Activated B cell treated with CpG ODN at 0.5 μM for 24 hours (primary cell): ENCODE measurements at regions of chr4 and their contacts with region 1.

Region 1: DNA sequence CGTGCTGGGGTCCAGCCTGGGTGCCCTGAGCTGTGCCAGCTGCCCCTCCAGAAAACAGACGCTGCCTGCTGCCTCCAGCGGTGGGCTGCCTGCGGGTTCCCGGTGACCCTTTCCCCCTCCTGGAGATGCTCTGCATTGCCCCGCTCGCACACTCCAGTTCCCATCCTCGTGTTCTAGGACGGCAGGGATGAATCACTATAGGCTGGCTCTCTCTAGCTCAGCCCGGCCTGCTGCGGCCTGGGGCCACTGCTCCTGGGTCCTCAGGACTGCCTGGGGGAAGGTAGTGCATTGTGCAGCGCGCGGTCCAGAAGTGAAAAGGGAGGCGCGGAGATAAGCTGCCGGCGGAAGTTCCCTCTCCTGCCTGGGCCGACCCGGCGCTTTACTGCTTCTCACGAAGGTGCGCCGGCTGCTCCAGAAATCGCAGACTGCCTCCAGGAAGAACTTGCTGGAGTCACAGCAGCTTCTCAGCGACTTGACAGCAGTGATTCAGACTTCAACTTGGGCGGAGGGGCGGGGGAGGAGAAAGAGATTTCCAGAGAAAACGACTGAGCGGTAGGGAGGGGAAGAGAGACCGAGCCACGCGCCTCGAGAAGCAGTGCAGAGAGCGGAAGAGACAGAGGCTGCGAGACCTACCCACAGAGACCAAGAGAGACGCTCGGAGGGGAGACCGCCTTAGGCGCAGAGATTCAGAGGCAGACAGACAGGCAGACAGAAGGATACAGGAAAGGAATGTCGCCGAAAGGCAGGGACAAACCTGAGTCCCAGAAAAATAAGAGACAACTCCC is 6.7 kb upstream of the MSX1 start:
- DNase-seq: no peak
- ATAC-seq: peak; percentile 68
- H3K4me3 Mint-ChIP-seq: peak overlapping the region; percentile 84
- H3K27ac Mint-ChIP-seq: peak overlapping the region; percentile 47
- H3K4me1 Mint-ChIP-seq: peaks cover 29% of the 10 kb centered on the region
- H3K27me3 Mint-ChIP-seq: peaks cover 55% of the 10 kb centered on the region
- CTCF ChIP-seq: no peak

Region 2: GRCh38 chr4:4762909-4763821 is 89.6 kb before region 1 on chr4:
- CTCF ChIA-PET with region 1: no interaction called
- POLR2A ChIA-PET with region 1: no interaction called
- intact Hi-C with region 1: loop called (anchors 5 kb)
- DNase-seq: peak; percentile 20
- ATAC-seq: peak; percentile 85
- H3K4me3 Mint-ChIP-seq: peak overlapping the region; percentile 73
- H3K27ac Mint-ChIP-seq: no peak overlapping the region
- H3K4me1 Mint-ChIP-seq: peaks cover 17% of the 10 kb centered on the region
- H3K27me3 Mint-ChIP-seq: peaks cover 20% of the 10 kb centered on the region
- CTCF ChIP-seq: no peak

Region 3: GRCh38 chr4:4867375-4868039 is 14.7 kb after region 1 on chr4:
- CTCF ChIA-PET with region 1: no interaction called
- POLR2A ChIA-PET with region 1: no interaction called
- intact Hi-C with region 1: loop called (anchors 1 kb)
- DNase-seq: no peak
- ATAC-seq: no peak
- H3K4me3 Mint-ChIP-seq: no peak overlapping the region
- H3K27ac Mint-ChIP-seq: no peak overlapping the region
- H3K4me1 Mint-ChIP-seq: peaks cover 27% of the 10 kb centered on the region
- H3K27me3 Mint-ChIP-seq: peaks cover 65% of the 10 kb centered on the region
- CTCF ChIP-seq: no peak